CD8-positive, alpha-beta memory T cell (primary cell): ENCODE measurements at regions of chr20 and their contacts with region 1.

Region 1: GRCh38 chr20:50987592-50988210 is 29.1 kb downstream of the MOCS3 start:
- DNase-seq: peak; percentile 35 to 69 (median 61)
- H3K4me3 ChIP-seq: no peak overlapping the region
- H3K4me3 Mint-ChIP-seq: no peak overlapping the region
- H3K27ac ChIP-seq: no peak overlapping the region
- H3K27ac Mint-ChIP-seq: no peak overlapping the region
- H3K4me1 ChIP-seq: no peaks in the 10 kb centered on the region
- H3K4me1 Mint-ChIP-seq: peaks cover 0 to 4% (median 3%) of the 10 kb centered on the region in 3 donors
- H3K27me3 ChIP-seq: peaks cover 6% of the 10 kb centered on the region
- H3K27me3 Mint-ChIP-seq: peaks cover 32 to 38% of the 10 kb centered on the region in 2 donors

Region 2: GRCh38 chr20:51306503-51307358 is 319.0 kb after region 1 on chr20:
- CTCF ChIA-PET with region 1: interaction called, 79 read pairs
- POLR2A ChIA-PET with region 1: no interaction called
- DNase-seq: peak; percentile 47 to 79 (median 56)
- H3K4me3 ChIP-seq: no peak overlapping the region
- H3K4me3 Mint-ChIP-seq: peak overlapping the region in 1 of 7 donors; percentile 23
- H3K27ac ChIP-seq: no peak overlapping the region
- H3K27ac Mint-ChIP-seq: no peak overlapping the region
- H3K4me1 ChIP-seq: no peaks in the 10 kb centered on the region
- H3K4me1 Mint-ChIP-seq: peaks cover 2 to 8% (median 5%) of the 10 kb centered on the region in 3 donors
- H3K27me3 ChIP-seq: peaks cover 7% of the 10 kb centered on the region
- H3K27me3 Mint-ChIP-seq: peaks cover 4 to 15% of the 10 kb centered on the region in 2 donors

Region 3: GRCh38 chr20:51326201-51326819 is 338.6 kb after region 1 on chr20:
- CTCF ChIA-PET with region 1: interaction called, 44 read pairs
- POLR2A ChIA-PET with region 1: no interaction called
- DNase-seq: peak in 4 of 5 donors; percentile 8 to 58 (median 17)
- H3K4me3 ChIP-seq: no peak overlapping the region
- H3K4me3 Mint-ChIP-seq: no peak overlapping the region
- H3K27ac ChIP-seq: no peak overlapping the region
- H3K27ac Mint-ChIP-seq: no peak overlapping the region
- H3K4me1 ChIP-seq: no peaks in the 10 kb centered on the region
- H3K4me1 Mint-ChIP-seq: no peaks in the 10 kb centered on the region
- H3K27me3 ChIP-seq: no peaks in the 10 kb centered on the region
- H3K27me3 Mint-ChIP-seq: peaks cover 3 to 4% of the 10 kb centered on the region in 2 donors